ENCODE measurements at regions of chr20 and their contacts with region 1.

Region 1: DNA sequence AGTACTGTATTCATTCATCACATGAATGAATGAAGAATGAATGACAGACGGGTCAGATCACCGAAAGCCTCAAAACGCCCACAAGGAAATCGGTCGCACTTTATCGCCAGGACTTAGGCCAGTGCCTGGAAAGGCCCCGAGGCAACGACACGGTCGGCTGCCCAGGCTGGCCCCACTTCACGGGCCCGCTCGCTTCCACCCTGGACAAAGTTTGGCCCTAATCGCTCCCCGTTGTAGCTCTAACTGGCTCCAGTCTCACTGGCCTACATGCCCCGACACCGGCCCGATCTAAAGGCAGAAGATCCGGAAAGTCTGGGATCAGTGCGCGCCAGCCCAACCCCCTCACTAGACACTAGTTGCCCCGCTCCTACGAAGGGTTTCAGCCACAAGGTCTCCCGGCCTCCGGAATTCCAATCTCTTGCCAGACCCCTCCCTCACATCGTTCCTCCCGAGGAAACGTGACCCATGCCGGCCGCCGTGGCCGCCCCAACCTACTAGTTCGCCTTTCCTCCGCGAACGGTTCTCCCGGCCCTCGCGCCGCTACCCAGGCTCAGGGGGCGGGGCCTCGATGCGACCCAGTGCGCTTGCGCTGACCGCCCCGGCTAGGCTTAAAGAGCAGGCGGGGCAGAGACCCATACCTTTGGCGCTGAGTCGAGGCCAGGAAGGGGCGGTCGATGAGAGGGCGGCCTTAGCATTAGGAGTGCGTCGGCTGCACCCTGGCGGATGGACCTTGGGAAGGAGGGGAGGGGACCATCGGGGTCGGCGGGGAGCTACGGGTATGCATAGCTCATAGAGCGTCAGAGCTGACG is at the starts of genes GSS and MYH7B:
- DNase-seq: peak; percentile 98
- ATAC-seq: peak; percentile 97
- H3K4me3 Mint-ChIP-seq: peak within 1 kb of the TSS; percentile 97
- H3K27ac Mint-ChIP-seq: peak within 1 kb of the TSS; percentile 93
- H3K4me1 Mint-ChIP-seq: peaks cover 24% of the 10 kb centered on the region
- H3K27me3 Mint-ChIP-seq: no peaks in the 10 kb centered on the region
- total RNA-seq, gene GSS: 59.4 to 64.6 TPM
- total RNA-seq, gene MYH7B: 0.16 to 0.26 TPM

Region 2: DNA sequence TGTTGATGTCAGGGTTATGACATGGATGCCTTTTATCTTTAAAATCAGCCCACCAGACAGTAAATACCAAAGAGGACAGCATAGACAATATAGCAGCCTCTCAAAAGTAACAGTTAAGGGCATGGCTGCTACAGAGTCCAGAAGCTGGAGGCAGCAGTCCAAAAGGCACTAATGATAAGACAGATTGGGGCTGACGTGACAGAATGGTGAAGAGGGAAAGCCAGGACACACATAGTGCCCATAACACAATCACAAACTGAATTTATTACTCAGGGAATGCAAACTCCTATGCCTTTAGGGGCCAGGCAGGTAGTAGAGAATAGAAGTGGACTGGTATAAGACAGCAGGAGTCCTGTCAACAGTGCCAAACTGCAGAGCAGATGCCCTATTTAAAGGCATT is 210.6 kb before region 1 on chr20:
- CTCF ChIA-PET with region 1: no interaction called
- DNase-seq: no peak
- ATAC-seq: no peak
- H3K4me3 Mint-ChIP-seq: no peak overlapping the region
- H3K27ac Mint-ChIP-seq: no peak overlapping the region
- H3K4me1 Mint-ChIP-seq: peaks cover 20% of the 10 kb centered on the region
- H3K27me3 Mint-ChIP-seq: no peaks in the 10 kb centered on the region

Region 3: GRCh38 chr20:34834459-34834893 is 121.0 kb before region 1 on chr20:
- CTCF ChIA-PET with region 1: interaction called, 12 read pairs
- DNase-seq: no peak
- ATAC-seq: no peak
- H3K4me3 Mint-ChIP-seq: no peak overlapping the region
- H3K27ac Mint-ChIP-seq: no peak overlapping the region
- H3K4me1 Mint-ChIP-seq: peaks cover 2% of the 10 kb centered on the region
- H3K27me3 Mint-ChIP-seq: peaks cover 59% of the 10 kb centered on the region

Region 4: GRCh38 chr20:34941226-34941625 is 14.2 kb before region 1 on chr20:
- CTCF ChIA-PET with region 1: interaction called, 10 read pairs
- DNase-seq: no peak
- ATAC-seq: no peak
- H3K4me3 Mint-ChIP-seq: no peak overlapping the region
- H3K27ac Mint-ChIP-seq: no peak overlapping the region
- H3K4me1 Mint-ChIP-seq: no peaks in the 10 kb centered on the region
- H3K27me3 Mint-ChIP-seq: no peaks in the 10 kb centered on the region

Region 5: DNA sequence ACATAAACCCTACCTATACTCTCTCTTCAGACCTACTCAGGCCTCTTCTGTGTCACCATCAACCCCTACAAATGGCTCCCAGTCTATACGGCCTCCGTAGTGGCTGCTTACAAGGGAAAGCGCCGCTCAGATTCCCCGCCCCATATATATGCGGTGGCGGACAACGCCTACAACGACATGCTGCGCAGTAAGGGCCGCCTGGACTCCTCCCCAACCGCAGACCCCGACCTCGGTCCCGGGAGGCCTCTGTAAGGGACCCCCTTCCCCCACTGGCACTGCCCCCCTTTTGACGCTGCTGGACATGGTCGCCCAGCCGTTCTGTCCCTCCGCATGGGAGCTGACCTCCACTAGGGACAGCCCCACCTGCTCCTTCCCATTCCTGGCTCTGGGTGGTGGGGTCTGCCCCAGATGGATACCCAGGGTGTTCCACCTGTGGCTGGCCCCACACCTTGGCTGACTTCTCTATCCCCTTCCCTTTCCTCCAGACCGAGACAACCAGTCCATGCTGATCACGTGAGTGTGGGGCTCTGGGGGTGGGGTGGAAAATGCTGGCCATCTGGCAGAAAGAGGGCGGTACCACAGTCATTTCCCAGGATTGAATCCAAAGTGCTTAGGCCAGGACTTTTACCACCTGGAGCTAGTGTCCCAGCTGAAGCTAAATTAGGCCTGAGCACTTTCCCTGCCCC is 25.3 kb after region 1 on chr20:
- CTCF ChIA-PET with region 1: no interaction called
- DNase-seq: no peak
- ATAC-seq: no peak
- H3K4me3 Mint-ChIP-seq: no peak overlapping the region
- H3K27ac Mint-ChIP-seq: no peak overlapping the region
- H3K4me1 Mint-ChIP-seq: no peaks in the 10 kb centered on the region
- H3K27me3 Mint-ChIP-seq: peaks cover 10% of the 10 kb centered on the region

Region 6: DNA sequence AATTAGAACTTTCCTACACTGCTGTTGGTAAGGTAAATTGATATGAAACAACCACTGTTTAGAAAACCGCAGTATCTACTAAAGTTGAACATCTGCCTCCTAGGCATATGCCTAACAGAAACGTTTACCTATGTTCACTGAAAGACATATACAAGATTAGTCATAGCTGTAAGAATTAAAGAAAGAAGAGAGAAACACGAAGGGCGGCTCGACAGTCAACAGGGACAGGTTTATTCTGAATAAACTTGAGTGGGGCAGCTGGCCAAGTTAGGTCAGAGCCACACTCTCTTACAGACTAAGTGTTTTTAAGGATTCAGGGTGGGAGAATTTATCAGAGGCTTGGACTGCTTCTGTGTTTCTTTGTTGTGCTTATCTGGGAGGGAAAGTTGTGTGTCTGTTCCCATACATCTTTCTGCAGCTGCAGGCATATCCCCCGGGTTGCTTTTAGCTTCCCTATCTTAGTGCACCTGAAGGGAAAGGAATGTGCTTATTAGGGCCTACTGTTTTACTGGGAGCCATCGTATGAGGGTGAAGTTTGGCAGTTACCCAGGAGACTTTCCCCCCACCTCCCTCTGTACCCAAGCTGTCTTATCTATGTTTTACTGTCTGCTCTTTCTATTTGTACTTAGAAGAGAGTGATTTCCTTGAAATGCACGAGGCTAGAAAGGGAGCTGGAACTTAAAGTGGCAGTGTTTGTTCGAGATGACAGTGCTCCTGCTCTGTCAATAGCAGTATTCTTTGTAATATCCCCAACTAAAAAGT is 236.9 kb after region 1 on chr20:
- CTCF ChIA-PET with region 1: no interaction called
- DNase-seq: no peak
- ATAC-seq: no peak
- H3K4me3 Mint-ChIP-seq: no peak overlapping the region
- H3K27ac Mint-ChIP-seq: no peak overlapping the region
- H3K4me1 Mint-ChIP-seq: no peaks in the 10 kb centered on the region
- H3K27me3 Mint-ChIP-seq: no peaks in the 10 kb centered on the region

Measured in activated CD8-positive, alpha-beta memory T cell treated with anti-CD3 and anti-CD28 coated beads, Interleukin-2, amount 10 ng/mL, durations not matched to agents 7 days and 5 days (primary cell).